ENCODE measurements at regions of chr4 and their contacts with region 1.

Region 1: DNA sequence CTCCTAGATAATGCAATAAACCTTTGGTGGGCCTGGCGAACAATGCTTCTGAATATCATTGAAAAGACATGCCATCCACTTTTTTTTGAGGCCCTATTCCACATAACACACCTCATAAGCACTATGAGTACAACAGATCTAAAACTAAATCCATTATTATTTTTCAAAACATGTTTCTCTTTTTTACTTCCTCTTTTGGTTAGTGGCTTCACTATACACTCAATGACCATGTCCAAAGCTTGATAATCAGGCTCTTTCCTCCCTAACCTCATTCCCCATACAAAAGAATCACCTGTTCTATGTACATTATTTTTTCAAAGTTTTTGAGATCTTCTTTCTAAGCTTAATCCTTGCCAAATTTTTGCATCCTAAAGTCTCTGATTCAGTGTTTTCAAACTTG is 20.4 kb upstream of the NPY2R start:
- DNase-seq: no peak
- ATAC-seq: peak; percentile 62
- H3K4me3 ChIP-seq: no peak overlapping the region
- H3K27ac ChIP-seq: no peak overlapping the region
- H3K4me1 ChIP-seq: no peaks in the 10 kb centered on the region
- H3K27me3 ChIP-seq: no peaks in the 10 kb centered on the region
- CTCF ChIP-seq: no peak
- EP300 ChIP-seq: no peak
- POLR2A ChIP-seq: no peak
- RAD21 ChIP-seq: no peak

Region 2: GRCh38 chr4:155929833-155930232 is 741.8 kb after region 1 on chr4:
- CTCF ChIA-PET with region 1: no interaction called
- POLR2A ChIA-PET with region 1: no interaction called
- RAD21 ChIA-PET with region 1: no interaction called
- SMC1A ChIA-PET with region 1: no interaction called
- in situ Hi-C with region 1: no loop called
- intact Hi-C with region 1: loop called (anchors 10 kb)
- DNase-seq: no peak
- ATAC-seq: no peak
- H3K4me3 ChIP-seq: no peak overlapping the region
- H3K27ac ChIP-seq: no peak overlapping the region
- H3K4me1 ChIP-seq: no peaks in the 10 kb centered on the region
- H3K27me3 ChIP-seq: no peaks in the 10 kb centered on the region
- CTCF ChIP-seq: no peak
- EP300 ChIP-seq: no peak
- POLR2A ChIP-seq: no peak
- RAD21 ChIP-seq: no peak

Measured in GM12878 (cell line).